ENCODE measurements at regions of chr7 and their contacts with region 1.

Region 1: DNA sequence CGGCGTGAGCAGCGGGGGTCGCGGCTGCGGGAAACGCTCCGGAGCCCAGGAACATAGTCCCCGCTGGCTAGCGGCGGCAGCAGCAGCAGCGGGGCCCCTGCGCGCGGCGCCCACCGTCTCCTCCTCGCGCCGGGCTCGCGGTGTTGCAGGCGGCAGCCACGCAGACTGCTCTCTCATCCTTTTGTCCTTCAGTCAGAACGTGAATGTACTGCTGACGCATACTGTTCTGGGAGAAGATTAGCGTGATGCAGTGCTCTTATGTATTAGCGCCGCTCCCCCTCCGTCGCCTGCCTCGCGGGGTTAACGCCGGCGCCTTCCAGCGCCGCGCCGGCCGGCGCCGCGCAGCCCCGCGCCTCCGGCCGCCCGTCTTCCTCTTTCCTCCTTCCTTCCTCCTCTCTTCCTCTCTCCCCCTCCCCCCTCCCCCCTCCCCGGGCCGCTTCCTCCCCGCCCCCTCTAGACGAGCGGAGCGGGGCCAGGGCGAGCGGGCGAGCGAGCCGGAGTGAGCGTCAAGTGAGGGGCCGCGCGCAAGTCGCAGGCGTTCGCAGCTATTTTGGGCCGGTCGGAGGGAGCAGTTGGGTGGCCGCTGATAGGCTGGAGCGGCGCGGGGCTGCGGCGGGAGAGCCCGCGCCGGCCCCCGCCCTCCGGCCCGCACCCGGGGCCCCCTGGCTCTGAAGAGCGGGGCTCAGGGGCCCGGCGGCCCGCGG is 816 bp upstream of the LRRC4 start:
- DNase-seq: peak in 4 of 10 donors; percentile 59 to 75 (median 72)
- H3K4me3 ChIP-seq: peak overlapping the region; percentile 56 to 85 (median 72)
- H3K27ac ChIP-seq: peak overlapping the region in 58 of 59 donors; percentile 63 to 96 (median 88)
- H3K27me3 ChIP-seq: no peaks in the 10 kb centered on the region
- CTCF ChIP-seq: peak in 21 of 56 donors; percentile 4 to 36 (median 20)

Region 2: DNA sequence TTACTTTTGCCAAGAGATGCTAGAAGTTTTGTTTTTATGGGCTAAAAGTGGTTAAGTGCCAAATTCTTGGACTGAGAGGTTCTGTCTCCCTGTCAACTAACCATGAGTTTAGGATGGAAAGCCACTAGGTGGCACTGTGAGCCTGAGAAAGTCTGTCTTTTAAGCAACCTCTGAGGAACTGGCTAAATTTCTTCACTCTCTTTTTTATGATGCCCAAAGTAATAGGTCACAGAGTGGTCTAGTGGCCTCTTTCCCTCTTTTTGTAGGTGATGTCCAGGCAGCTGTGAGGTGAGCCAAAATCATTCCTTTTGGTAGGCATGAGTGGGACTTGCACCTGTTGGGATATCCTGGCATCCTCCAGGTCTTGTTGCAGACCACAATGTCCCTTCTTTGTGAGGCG is 323.3 kb before region 1 on chr7:
- intact Hi-C with region 1: loop called (anchors 5 kb)
- DNase-seq: peak in 8 of 10 donors; percentile 61 to 92 (median 74)
- H3K4me3 ChIP-seq: no peak overlapping the region
- H3K27ac ChIP-seq: peak overlapping the region in 12 of 59 donors; percentile 4 to 49 (median 32)
- H3K27me3 ChIP-seq: no peaks in the 10 kb centered on the region
- CTCF ChIP-seq: peak; percentile 71 to 97 (median 88)

Region 3: DNA sequence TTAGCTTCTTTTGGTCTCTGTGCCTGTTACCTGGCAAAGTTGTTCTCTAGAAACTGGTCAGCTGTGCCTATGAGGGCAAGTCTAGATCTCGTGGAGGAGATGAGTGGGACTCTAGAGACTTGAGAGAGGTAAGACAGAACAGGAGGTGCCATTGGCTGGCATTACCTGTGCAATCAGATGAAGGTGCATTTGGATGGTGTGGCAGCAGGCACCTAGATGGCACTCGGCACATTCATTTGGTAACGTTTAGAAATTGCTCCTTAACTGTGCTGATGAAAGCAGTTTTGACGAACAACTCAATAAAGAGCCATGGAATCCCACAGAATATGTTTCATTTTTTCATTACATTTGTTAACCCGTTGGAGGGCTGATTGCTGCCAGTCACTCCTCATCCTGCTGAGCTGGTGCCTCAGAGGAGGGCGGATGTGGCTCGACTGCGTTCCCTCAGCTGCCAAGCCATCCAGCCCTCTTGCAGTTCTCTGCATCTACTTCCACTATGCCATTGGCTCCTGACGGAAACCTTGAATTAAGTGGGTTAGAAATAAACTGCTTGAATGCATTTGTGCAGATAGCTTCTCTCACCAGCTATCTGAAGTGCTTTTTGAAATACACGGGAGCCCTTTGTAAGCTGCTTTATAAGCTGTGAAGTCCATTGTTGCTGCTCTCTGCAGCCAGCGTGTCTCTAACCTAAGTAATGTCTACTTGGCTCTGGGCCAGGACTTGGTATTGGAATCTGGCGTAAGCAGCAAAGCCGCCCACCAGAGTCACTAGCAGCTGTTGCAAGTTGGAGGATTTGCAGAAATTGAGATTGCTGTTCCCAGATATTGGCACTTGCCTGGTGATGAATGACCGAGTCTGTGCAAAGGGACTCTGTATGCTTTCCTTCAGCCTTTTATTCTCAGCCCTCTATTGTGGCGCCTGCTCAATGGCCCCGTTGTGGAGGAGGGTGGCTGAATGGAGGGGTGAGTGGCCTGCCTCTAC is 88.2 kb before region 1 on chr7:
- intact Hi-C with region 1: loop called (anchors 5 kb)
- DNase-seq: peak; percentile 55 to 85 (median 76)
- H3K4me3 ChIP-seq: peak overlapping the region in 31 of 59 donors; percentile 1 to 48 (median 24)
- H3K27ac ChIP-seq: peak overlapping the region in 58 of 59 donors; percentile 39 to 92 (median 79)
- H3K27me3 ChIP-seq: no peaks in the 10 kb centered on the region
- CTCF ChIP-seq: peak in 13 of 56 donors; percentile 6 to 38 (median 15)

Region 4: GRCh38 chr7:128209229-128210035 is 177.4 kb after region 1 on chr7:
- intact Hi-C with region 1: loop called (anchors 1 to 5 kb)
- DNase-seq: peak in 8 of 10 donors; percentile 62 to 82 (median 72)
- H3K4me3 ChIP-seq: no peak overlapping the region
- H3K27ac ChIP-seq: peak overlapping the region in 4 of 59 donors; percentile 24 to 48 (median 34)
- H3K27me3 ChIP-seq: peaks cover 0 to 5% (median 0%) of the 10 kb centered on the region in 45 donors
- CTCF ChIP-seq: peak; percentile 90 to 100 (median 99)